GM12878 (cell line): ENCODE measurements at regions of chr6 and their contacts with region 1.

Region 1: GRCh38 chr6:37538107-37538506 is 38.4 kb upstream of the CCDC167 start:
- DNase-seq: no peak
- ATAC-seq: peak; percentile 93
- H3K4me3 ChIP-seq: no peak overlapping the region
- H3K27ac ChIP-seq: no peak overlapping the region
- H3K4me1 ChIP-seq: no peaks in the 10 kb centered on the region
- H3K27me3 ChIP-seq: no peaks in the 10 kb centered on the region
- CTCF ChIP-seq: peak; percentile 52 to 85 (median 77)
- EP300 ChIP-seq: no peak
- POLR2A ChIP-seq: no peak
- RAD21 ChIP-seq: peak; percentile 91

Region 2: DNA sequence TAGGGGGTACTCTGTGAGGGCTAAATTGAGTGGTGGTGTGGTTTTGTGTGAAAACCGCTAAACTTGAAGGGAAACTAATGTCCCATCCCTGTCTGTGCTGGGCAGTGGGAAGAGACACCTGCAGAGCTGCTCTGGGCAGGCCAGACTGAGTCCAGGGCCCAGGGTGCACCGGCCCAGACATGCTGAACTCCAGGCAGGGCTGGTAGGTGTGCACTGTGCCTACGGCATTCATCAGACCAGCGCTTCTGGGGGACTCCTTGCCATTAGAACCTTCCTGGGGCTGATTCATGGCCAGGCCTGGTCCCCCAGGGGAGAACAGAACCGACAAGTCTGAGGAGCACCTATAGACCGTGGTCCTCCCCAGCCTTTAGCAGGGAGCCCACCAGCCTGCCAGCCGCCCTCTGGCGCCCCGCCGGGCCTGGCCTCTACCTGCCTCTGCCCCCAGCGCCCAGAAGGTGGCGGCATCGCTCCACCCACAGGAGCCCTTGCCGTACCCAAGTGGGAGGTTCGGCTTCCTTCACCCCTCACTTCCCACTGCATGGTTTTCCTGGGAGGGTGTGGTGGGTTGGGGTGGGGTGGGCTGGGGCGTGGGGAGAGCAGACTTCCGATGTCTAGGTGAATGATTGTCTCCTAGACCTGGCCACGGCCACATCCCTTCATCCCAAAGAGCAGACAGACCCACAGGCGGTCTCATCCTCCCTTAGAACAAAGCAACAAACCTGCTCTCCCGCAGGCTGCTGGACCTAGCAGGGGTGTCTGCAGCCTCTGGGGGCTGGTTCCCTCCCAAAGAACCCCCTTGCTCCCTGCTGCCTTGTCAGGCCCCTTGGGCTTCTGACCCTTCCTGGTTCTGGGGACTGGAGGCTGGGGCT is 54.0 kb before region 1 on chr6:
- CTCF ChIA-PET with region 1: interaction called, 13 read pairs
- POLR2A ChIA-PET with region 1: no interaction called
- RAD21 ChIA-PET with region 1: interaction called, 10 read pairs
- SMC1A ChIA-PET with region 1: interaction called, 10 read pairs
- in situ Hi-C with region 1: no loop called
- intact Hi-C with region 1: loop called (anchors 5 kb)
- DNase-seq: no peak
- ATAC-seq: peak; percentile 93
- H3K4me3 ChIP-seq: no peak overlapping the region
- H3K27ac ChIP-seq: no peak overlapping the region
- H3K4me1 ChIP-seq: peaks cover 7% of the 10 kb centered on the region; the same call in 1 of the 2 replicates
- H3K27me3 ChIP-seq: no peaks in the 10 kb centered on the region
- CTCF ChIP-seq: peak; percentile 85 to 97 (median 96); a peak in 5 of 6 replicates
- EP300 ChIP-seq: no peak
- POLR2A ChIP-seq: no peak; the same call in 1 of the 2 replicates
- RAD21 ChIP-seq: peak; percentile 97

Region 3: DNA sequence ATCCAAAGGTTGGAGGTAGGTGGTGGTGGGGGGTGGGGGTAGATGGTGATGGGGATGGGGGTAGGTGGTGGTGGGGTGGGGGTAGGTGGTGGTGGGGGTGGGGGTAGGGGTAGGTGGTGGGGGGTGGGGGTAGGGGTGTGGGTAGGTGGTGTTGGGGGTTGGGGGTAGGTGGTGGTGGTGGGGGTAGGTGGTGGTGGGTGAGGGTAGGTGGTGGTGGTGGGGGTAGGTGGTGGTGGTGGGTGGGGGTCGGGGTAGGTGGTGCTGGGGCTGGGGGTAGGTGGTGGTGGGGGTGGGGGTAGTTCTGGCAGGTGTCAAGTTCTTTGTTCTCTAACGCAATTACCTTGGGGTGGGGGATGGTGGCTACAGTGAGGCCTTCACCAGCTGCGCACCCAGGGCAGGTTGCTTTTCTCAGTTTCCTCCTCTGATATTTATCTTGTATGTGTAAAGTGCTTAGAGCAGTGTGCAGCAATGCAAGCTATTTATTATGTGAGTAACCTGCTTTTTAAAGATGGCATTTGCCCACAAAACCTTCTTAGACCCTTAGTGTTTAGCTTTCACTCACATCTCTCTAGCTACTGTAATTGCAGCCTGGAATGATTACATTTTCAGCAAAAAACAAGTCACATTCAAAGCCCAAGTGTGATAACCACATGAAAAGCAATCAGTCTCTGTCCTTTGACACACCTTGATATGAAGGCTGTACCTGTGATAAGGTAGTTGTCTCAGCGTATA is 30.3 kb before region 1 on chr6:
- CTCF ChIA-PET with region 1: interaction called, 18 read pairs
- POLR2A ChIA-PET with region 1: interaction called, 4 read pairs
- RAD21 ChIA-PET with region 1: interaction called, 7 read pairs
- SMC1A ChIA-PET with region 1: interaction called, 7 read pairs
- in situ Hi-C with region 1: no loop called
- intact Hi-C with region 1: no loop called
- DNase-seq: no peak
- ATAC-seq: peak; percentile 72
- H3K4me3 ChIP-seq: no peak overlapping the region
- H3K27ac ChIP-seq: no peak overlapping the region
- H3K4me1 ChIP-seq: peaks cover 23% of the 10 kb centered on the region
- H3K27me3 ChIP-seq: no peaks in the 10 kb centered on the region
- CTCF ChIP-seq: no peak
- EP300 ChIP-seq: no peak
- POLR2A ChIP-seq: no peak
- RAD21 ChIP-seq: no peak

Region 4: DNA sequence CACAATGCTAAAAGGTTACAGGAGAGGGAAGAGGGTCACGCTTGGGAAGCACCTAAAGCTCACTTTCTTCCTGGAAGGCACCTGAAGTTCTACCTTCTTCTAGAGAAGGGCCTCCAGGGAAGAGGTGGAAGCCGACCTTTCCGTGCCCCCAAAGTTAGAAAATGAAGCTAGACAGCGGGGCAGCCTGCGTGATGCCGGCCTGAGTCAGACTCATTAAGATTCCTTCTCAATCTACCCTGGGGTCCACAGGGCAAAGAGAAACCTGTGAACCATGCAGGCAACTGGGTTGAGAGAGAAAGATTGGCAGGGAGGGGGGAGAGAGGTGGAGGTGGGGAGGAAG is 16.3 kb after region 1 on chr6:
- CTCF ChIA-PET with region 1: interaction called, 590 read pairs
- POLR2A ChIA-PET with region 1: interaction called, 25 read pairs
- RAD21 ChIA-PET with region 1: interaction called, 76 read pairs
- SMC1A ChIA-PET with region 1: interaction called, 346 read pairs
- in situ Hi-C with region 1: no loop called
- intact Hi-C with region 1: no loop called
- DNase-seq: no peak
- ATAC-seq: peak; percentile 8
- H3K4me3 ChIP-seq: peak overlapping the region; percentile 81
- H3K27ac ChIP-seq: peak overlapping the region; percentile 91
- H3K4me1 ChIP-seq: peaks cover 86% of the 10 kb centered on the region
- H3K27me3 ChIP-seq: no peaks in the 10 kb centered on the region
- CTCF ChIP-seq: no peak
- EP300 ChIP-seq: no peak
- POLR2A ChIP-seq: no peak
- RAD21 ChIP-seq: no peak

Region 5: GRCh38 chr6:37582306-37582705 is 44.2 kb after region 1 on chr6:
- CTCF ChIA-PET with region 1: interaction called, 11 read pairs
- POLR2A ChIA-PET with region 1: no interaction called
- RAD21 ChIA-PET with region 1: interaction called, 5 read pairs
- SMC1A ChIA-PET with region 1: interaction called, 17 read pairs
- in situ Hi-C with region 1: no loop called
- intact Hi-C with region 1: no loop called
- DNase-seq: no peak
- ATAC-seq: no peak
- H3K4me3 ChIP-seq: no peak overlapping the region
- H3K27ac ChIP-seq: no peak overlapping the region
- H3K4me1 ChIP-seq: no peaks in the 10 kb centered on the region
- H3K27me3 ChIP-seq: no peaks in the 10 kb centered on the region; a peak in 1 of 4 replicates
- CTCF ChIP-seq: no peak
- EP300 ChIP-seq: no peak
- POLR2A ChIP-seq: no peak
- RAD21 ChIP-seq: no peak

Region 6: GRCh38 chr6:37691904-37692806 is 154.0 kb after region 1 on chr6:
- CTCF ChIA-PET with region 1: interaction called, 99 read pairs
- POLR2A ChIA-PET with region 1: no interaction called
- RAD21 ChIA-PET with region 1: interaction called, 58 read pairs
- SMC1A ChIA-PET with region 1: interaction called, 46 read pairs
- in situ Hi-C with region 1: loop called (anchors 5 kb)
- intact Hi-C with region 1: loop called (anchors 5 kb)
- DNase-seq: no peak
- ATAC-seq: peak; percentile 87
- H3K4me3 ChIP-seq: no peak overlapping the region
- H3K27ac ChIP-seq: no peak overlapping the region
- H3K4me1 ChIP-seq: peaks cover 11% of the 10 kb centered on the region
- H3K27me3 ChIP-seq: peaks cover 17 to 18% of the 10 kb centered on the region in 2 experiments
- CTCF ChIP-seq: peak; percentile 97 to 99 (median 98)
- EP300 ChIP-seq: no peak
- POLR2A ChIP-seq: no peak
- RAD21 ChIP-seq: peak; percentile 95